ENCODE measurements at regions of chr3 and their contacts with region 1.

Region 1: DNA sequence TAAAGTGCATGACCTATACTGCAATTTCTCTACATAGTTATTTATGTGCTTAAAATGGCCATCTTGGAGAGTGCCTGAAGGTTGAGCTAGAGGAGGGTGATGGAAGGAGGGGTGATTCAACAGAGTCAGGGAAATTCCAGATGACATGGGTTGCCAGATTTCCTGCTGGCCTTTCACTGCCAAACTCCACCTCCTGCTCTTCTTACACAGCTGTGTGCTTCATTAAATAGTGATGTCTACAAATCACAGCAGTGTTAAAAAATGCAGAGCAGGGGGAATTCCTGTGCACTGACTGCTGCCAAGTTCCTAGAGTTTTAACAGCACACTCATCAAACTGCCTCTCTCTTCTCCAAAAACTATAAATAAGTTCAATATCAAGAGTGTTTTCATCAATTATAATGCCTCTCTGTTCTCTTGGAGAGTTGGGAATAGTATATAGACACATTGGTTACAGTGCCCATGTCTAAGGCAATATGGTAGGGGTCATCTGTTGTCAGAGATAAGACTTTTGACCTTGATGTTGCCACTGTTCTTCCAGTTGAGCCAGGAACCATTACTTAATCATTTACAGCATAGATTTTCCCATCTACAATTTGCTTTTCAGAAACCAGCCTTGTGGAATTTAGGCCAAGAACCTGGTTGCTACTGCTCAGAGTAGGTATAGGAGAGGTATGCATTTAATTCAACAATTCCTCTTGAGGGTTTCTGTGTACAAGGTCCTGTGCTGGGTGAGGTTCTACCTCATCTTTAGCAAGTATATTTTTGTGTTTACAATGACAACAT is 79.6 kb downstream of the TP63 start:
- DNase-seq: peak; percentile 27 to 71
- ATAC-seq: peak; percentile 84 to 96 (median 96)
- H3K4me3 ChIP-seq: no peak overlapping the region
- H3K27ac ChIP-seq: peak overlapping the region; percentile 38
- H3K4me1 ChIP-seq: peaks cover 68% of the 10 kb centered on the region
- H3K27me3 ChIP-seq: no peaks in the 10 kb centered on the region
- CTCF ChIP-seq: no peak

Region 2: GRCh38 chr3:189148081-189148507 is 562.7 kb before region 1 on chr3:
- intact Hi-C with region 1: no loop called
- DNase-seq: peak; percentile 33 to 64
- ATAC-seq: peak; percentile 76 to 89 (median 80)
- H3K4me3 ChIP-seq: no peak overlapping the region
- H3K27ac ChIP-seq: peak overlapping the region; percentile 48
- H3K4me1 ChIP-seq: peaks cover 26% of the 10 kb centered on the region
- H3K27me3 ChIP-seq: no peaks in the 10 kb centered on the region
- CTCF ChIP-seq: peak; percentile 78

Region 3: GRCh38 chr3:189404797-189405484 is 305.9 kb before region 1 on chr3:
- intact Hi-C with region 1: no loop called
- DNase-seq: no peak
- ATAC-seq: no peak
- H3K4me3 ChIP-seq: no peak overlapping the region
- H3K27ac ChIP-seq: peak overlapping the region; percentile 77
- H3K4me1 ChIP-seq: peaks cover 22% of the 10 kb centered on the region
- H3K27me3 ChIP-seq: no peaks in the 10 kb centered on the region
- CTCF ChIP-seq: no peak

Region 4: DNA sequence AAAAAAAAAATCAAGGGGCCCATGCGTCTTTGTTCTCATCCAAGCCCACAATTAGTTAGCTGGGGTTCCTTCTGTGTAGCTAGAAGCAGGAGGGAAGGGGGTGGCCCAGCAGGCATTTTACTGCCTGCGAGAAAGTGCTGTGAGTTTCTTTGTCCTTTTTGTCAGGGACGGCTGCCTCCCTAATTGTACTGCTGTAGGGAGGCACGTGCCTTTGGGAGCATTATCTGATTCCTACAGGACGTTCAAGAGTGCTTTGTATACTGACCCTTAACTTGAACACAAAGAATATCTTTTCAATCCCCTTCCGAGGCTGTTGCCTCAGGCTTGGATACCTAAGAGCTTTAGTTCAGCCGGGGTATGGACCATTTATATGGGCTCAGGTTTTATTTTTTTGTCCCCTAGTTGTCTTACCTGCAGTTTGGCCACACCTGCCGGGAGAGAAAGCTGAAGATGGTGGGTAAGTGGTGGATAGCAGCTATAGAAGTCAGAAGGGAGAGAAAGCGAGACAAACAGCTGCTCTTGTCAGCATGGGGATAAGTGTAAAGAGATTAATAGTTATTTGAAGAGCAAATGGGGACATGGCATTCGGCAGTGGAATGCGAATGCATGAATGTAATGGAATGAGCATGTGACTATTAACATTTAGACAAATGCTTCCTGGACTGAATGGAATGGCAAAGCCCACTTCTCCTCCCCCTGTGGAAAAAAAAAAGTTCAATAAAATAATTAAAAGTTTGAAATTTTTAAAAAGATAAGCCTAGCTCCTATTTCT is 95.6 kb after region 1 on chr3:
- intact Hi-C with region 1: loop called in 1 of 2 experiments (anchors 10 kb)
- DNase-seq: no peak
- ATAC-seq: peak; percentile 45 to 85 (median 70)
- H3K4me3 ChIP-seq: no peak overlapping the region
- H3K27ac ChIP-seq: peak overlapping the region; percentile 64
- H3K4me1 ChIP-seq: peaks cover 37% of the 10 kb centered on the region
- H3K27me3 ChIP-seq: no peaks in the 10 kb centered on the region
- CTCF ChIP-seq: no peak

Measured in psoas muscle (tissue), 8 donors.